ENCODE measurements at regions of chr2 and their contacts with region 1.

Region 1: GRCh38 chr2:197141702-197142473 is 168.7 kb downstream of the ANKRD44 start:
- DNase-seq: no peak
- H3K4me3 ChIP-seq: no peak overlapping the region
- CTCF ChIP-seq: no peak
- POLR2A ChIP-seq: no peak

Region 2: DNA sequence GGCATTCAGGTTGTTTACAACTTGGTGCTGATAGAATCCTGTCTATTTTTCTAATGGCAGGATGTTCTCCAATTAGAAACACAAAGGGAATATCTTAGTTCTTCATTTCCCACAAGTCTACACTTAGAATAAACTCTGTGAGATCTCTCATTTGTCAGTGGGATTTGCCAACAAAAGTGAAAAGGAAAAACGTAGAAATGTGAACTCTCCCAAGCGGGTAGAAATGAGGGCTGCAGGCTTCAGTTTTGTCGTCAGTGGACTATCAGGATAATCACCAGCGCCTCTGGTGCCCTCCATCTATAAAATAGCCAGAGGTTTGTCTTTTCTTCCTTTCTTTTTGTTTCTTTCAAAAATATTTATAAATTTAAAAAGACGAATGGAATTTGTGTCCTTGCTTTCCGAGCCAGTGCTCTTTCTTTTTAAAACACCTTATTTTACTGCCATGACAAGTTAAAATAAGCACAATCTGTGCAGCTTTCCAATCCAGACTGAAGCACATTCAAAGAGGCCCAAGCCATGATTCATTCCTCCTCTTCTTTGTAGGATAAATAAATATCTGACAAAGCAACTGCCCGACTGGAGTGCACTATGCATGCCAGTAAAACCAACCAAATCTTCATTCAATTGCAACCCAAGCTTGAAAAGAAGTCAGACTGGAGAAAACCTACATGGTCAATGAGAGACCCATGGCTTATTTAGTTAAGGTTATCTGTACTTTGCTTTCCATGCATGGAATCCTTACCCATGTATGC is 17.1 kb before region 1 on chr2:
- intact Hi-C with region 1: no loop called
- DNase-seq: no peak
- H3K4me3 ChIP-seq: no peak overlapping the region
- CTCF ChIP-seq: no peak
- POLR2A ChIP-seq: no peak

Region 3: GRCh38 chr2:197894751-197895274 is 752.9 kb after region 1 on chr2:
- intact Hi-C with region 1: loop called (anchors 5 kb)
- DNase-seq: no peak
- H3K4me3 ChIP-seq: no peak overlapping the region
- CTCF ChIP-seq: no peak
- POLR2A ChIP-seq: no peak

Measured in lower leg skin (tissue), 4 donors.